ENCODE measurements at regions of chr1 and their contacts with region 1.

Region 1: GRCh38 chr1:180178511-180179161 is 24.0 kb downstream of the QSOX1 start:
- H3K4me3 Mint-ChIP-seq: no peak overlapping the region
- H3K27ac Mint-ChIP-seq: no peak overlapping the region
- H3K4me1 Mint-ChIP-seq: no peaks in the 10 kb centered on the region
- H3K27me3 Mint-ChIP-seq: no peaks in the 10 kb centered on the region

Region 2: DNA sequence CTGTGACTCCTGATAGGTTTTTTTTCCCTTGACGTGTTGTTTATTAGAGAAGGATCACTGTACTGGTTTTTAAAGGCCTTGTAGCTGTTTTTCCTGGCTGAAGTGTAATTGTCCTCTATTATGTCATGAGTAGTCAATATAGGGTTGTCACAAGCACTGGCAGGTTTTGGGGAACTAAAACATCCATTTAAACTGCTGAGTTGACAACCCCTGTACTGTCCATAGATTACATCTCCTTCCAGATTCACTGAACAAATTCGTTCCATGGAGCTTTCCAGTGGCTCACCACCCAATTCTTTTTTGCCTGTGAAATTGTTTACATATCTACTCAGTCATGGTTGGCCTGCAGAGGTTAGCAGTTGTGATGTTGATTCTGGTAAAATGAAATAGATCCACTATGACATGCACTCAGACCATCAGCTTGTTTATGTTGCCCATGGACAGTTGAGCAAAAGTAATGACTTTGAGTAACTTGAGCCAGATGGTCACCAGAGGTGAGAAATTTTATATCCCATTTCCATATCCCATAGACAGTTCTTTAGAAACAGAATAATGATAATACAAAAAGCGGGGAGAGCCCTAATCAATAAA is 83.8 kb before region 1 on chr1:
- intact Hi-C with region 1: loop called (anchors 5 kb)
- H3K4me3 Mint-ChIP-seq: no peak overlapping the region
- H3K27ac Mint-ChIP-seq: no peak overlapping the region
- H3K4me1 Mint-ChIP-seq: no peaks in the 10 kb centered on the region
- H3K27me3 Mint-ChIP-seq: no peaks in the 10 kb centered on the region